MCF 10A (cell line): ENCODE measurements at regions of chr20 and their contacts with region 1.

Region 1: GRCh38 chr20:10603971-10604864 is 69.6 kb downstream of the JAG1 start:
- DNase-seq: peak; percentile 94
- H3K4me3 Mint-ChIP-seq: peak overlapping the region; percentile 47
- H3K27ac Mint-ChIP-seq: peak overlapping the region; percentile 87
- H3K4me1 Mint-ChIP-seq: peaks cover 20% of the 10 kb centered on the region
- H3K27me3 Mint-ChIP-seq: no peaks in the 10 kb centered on the region
- CTCF ChIP-seq: no peak

Region 2: GRCh38 chr20:10402938-10403608 is 201.1 kb before region 1 on chr20:
- CTCF ChIA-PET with region 1: no interaction called
- POLR2A ChIA-PET with region 1: no interaction called
- intact Hi-C with region 1: no loop called
- DNase-seq: no peak
- H3K4me3 Mint-ChIP-seq: no peak overlapping the region
- H3K27ac Mint-ChIP-seq: no peak overlapping the region
- H3K4me1 Mint-ChIP-seq: no peaks in the 10 kb centered on the region
- H3K27me3 Mint-ChIP-seq: no peaks in the 10 kb centered on the region
- CTCF ChIP-seq: no peak

Region 3: DNA sequence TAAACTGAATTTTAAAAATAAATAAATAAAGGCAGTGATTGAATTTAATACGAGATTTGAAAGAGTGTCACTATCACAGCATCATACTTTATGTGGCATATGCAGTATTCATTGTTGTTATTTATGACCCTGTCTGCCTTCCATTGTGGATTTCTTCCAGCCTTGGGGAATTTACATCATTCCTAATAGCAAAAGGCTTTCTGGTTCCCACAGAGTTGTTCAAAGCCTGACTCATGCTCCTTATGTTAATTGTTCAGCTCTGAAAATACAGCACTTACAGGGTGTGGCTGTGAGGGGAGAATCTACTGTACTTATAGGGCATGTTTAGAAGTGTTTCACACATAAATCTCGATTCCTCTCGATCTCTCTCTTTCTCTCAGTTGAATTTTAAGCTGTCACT is 15.2 kb after region 1 on chr20:
- CTCF ChIA-PET with region 1: interaction called, 8 read pairs
- POLR2A ChIA-PET with region 1: interaction called, 43 read pairs
- intact Hi-C with region 1: loop called (anchors 1 kb)
- DNase-seq: peak; percentile 92
- H3K4me3 Mint-ChIP-seq: peak overlapping the region; percentile 13
- H3K27ac Mint-ChIP-seq: peak overlapping the region; percentile 90
- H3K4me1 Mint-ChIP-seq: peaks cover 18% of the 10 kb centered on the region
- H3K27me3 Mint-ChIP-seq: no peaks in the 10 kb centered on the region
- CTCF ChIP-seq: no peak

Region 4: DNA sequence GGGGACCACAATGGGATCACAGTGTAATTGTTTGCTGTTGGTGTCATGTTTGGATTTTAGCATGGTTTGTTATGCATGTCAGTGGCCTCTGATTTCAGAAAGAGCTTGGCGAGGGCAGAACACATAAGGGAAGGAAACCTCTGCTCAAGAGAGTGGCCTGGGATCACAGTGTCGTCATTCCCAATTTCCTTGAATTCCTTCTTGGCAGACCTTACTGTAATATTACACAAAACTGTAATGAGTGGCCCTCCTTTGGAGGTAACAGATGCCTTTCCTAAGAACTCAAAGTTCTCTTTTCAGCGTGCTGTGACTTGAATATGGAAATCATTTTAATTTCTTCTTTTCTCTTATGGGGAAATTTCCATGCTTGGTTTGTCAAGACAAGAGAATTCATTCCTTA is 22.7 kb after region 1 on chr20:
- CTCF ChIA-PET with region 1: interaction called, 8 read pairs
- POLR2A ChIA-PET with region 1: interaction called, 38 read pairs
- intact Hi-C with region 1: no loop called
- DNase-seq: peak; percentile 86
- H3K4me3 Mint-ChIP-seq: no peak overlapping the region
- H3K27ac Mint-ChIP-seq: peak overlapping the region; percentile 27
- H3K4me1 Mint-ChIP-seq: peaks cover 25% of the 10 kb centered on the region
- H3K27me3 Mint-ChIP-seq: no peaks in the 10 kb centered on the region
- CTCF ChIP-seq: no peak